Gastrocnemius medialis (tissue), 4 donors: ENCODE measurements at regions of chr9 and their contacts with region 1.

Region 1: GRCh38 chr9:136631038-136632000 is 31.4 kb upstream of the EGFL7 start:
- DNase-seq: peak; percentile 44 to 64
- ATAC-seq: peak; percentile 75 to 86
- H3K4me3 ChIP-seq: no peak overlapping the region
- H3K27ac ChIP-seq: no peak overlapping the region
- H3K4me1 ChIP-seq: no peaks in the 10 kb centered on the region
- H3K27me3 ChIP-seq: no peaks in the 10 kb centered on the region
- CTCF ChIP-seq: peak; percentile 69 to 85 (median 83)
- POLR2A ChIP-seq: no peak

Region 2: GRCh38 chr9:136488247-136489214 is 142.8 kb before region 1 on chr9:
- in situ Hi-C with region 1: loop called (anchors 5 to 25 kb)
- intact Hi-C with region 1: loop called (anchors 1 kb)
- DNase-seq: peak; percentile 33 to 67
- ATAC-seq: peak; percentile 57 to 58
- H3K4me3 ChIP-seq: no peak overlapping the region
- H3K27ac ChIP-seq: no peak overlapping the region
- H3K4me1 ChIP-seq: peaks cover 11 to 12% of the 10 kb centered on the region in 2 donors
- H3K27me3 ChIP-seq: no peaks in the 10 kb centered on the region
- CTCF ChIP-seq: peak; percentile 97 to 98 (median 98)
- POLR2A ChIP-seq: no peak

Region 3: GRCh38 chr9:136493567-136493971 is 137.8 kb before region 1 on chr9:
- in situ Hi-C with region 1: loop called (anchors 5 to 25 kb)
- intact Hi-C with region 1: loop called (anchors 1 kb)
- DNase-seq: no peak
- ATAC-seq: no peak
- H3K4me3 ChIP-seq: no peak overlapping the region
- H3K27ac ChIP-seq: no peak overlapping the region
- H3K4me1 ChIP-seq: no peaks in the 10 kb centered on the region
- H3K27me3 ChIP-seq: no peaks in the 10 kb centered on the region
- CTCF ChIP-seq: no peak
- POLR2A ChIP-seq: no peak

Region 4: GRCh38 chr9:136527721-136528691 is 103.3 kb before region 1 on chr9:
- in situ Hi-C with region 1: no loop called
- intact Hi-C with region 1: loop called (anchors 10 kb)
- DNase-seq: no peak
- ATAC-seq: no peak
- H3K4me3 ChIP-seq: no peak overlapping the region
- H3K27ac ChIP-seq: peak overlapping the region; percentile 51 to 75 (median 58)
- H3K4me1 ChIP-seq: peaks cover 48 to 68% of the 10 kb centered on the region in 2 donors
- H3K27me3 ChIP-seq: no peaks in the 10 kb centered on the region
- CTCF ChIP-seq: no peak
- POLR2A ChIP-seq: no peak

Region 5: GRCh38 chr9:136614372-136614922 is 16.9 kb before region 1 on chr9:
- in situ Hi-C with region 1: no loop called
- intact Hi-C with region 1: no loop called
- DNase-seq: no peak
- ATAC-seq: peak; percentile 46 to 53
- H3K4me3 ChIP-seq: no peak overlapping the region
- H3K27ac ChIP-seq: peak overlapping the region in 3 of 4 donors; percentile 56 to 60 (median 57)
- H3K4me1 ChIP-seq: no peaks in the 10 kb centered on the region
- H3K27me3 ChIP-seq: peaks cover 0 to 6% (median 0%) of the 10 kb centered on the region in 3 donors
- CTCF ChIP-seq: no peak
- POLR2A ChIP-seq: no peak